Body of pancreas (tissue), 4 donors: ENCODE measurements at regions of chr20 and their contacts with region 1.

Region 1: GRCh38 chr20:44115762-44116644 is 71.0 kb downstream of the JPH2 start:
- DNase-seq: no peak
- ATAC-seq: no peak
- H3K4me3 ChIP-seq: no peak overlapping the region
- H3K27ac ChIP-seq: no peak overlapping the region
- H3K4me1 ChIP-seq: no peaks in the 10 kb centered on the region
- H3K27me3 ChIP-seq: peaks cover 0 to 10% of the 10 kb centered on the region in 2 donors
- CTCF ChIP-seq: no peak
- POLR2A ChIP-seq: no peak

Region 2: DNA sequence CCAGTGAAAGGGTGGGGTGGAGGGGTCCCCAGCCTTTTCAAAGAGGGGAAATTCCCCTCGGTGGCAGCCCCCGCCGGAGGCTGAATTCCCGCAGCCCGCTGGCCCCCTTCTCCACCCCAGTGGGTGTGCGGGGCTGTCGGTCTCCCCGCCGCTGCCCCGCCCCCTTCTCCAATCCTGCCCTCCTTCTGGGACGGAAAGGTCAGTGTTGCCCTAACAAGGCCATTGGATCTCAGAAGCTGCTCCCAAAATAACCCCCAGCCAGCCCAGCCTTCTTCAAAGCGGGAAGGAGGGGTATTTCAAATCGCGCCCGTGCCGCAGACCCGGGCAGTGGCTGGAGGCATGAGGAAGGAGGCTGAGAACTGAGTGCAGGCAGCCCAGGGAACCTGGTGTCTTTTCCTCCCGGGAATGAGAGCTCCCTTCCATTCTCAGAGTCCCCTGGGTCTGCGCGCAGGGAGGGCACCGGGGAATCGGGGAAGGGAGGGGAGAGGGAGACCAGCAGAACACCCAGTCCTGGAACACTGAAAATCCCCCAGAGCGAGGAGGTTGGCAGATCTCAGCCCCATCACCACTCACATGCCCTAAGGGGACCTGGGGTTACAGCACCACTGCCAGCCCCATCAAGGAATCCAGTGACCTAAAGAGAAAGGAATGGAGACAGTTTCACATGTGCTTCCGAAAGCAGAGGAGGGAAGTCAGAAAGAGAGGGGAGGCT is 71.2 kb after region 1 on chr20 and contains the start of gene JPH2:
- intact Hi-C with region 1: loop called (anchors 5 kb)
- DNase-seq: peak; percentile 15 to 47 (median 34)
- ATAC-seq: peak; percentile 60
- H3K4me3 ChIP-seq: peak within 1 kb of the TSS in 1 of 2 donors; percentile 8
- H3K27ac ChIP-seq: peak within 1 kb of the TSS in 2 of 4 donors; percentile 6 to 11
- H3K4me1 ChIP-seq: peaks cover 20% of the 10 kb centered on the region
- H3K27me3 ChIP-seq: no peaks in the 10 kb centered on the region
- CTCF ChIP-seq: no peak
- POLR2A ChIP-seq: no peak
- total RNA-seq, gene JPH2: 1.6 to 2.1 TPM